ENCODE measurements at regions of chr17 and their contacts with region 1.

Region 1: GRCh38 chr17:66483906-66484305 is 181.5 kb downstream of the PRKCA start:
- DNase-seq: no peak
- H3K4me3 ChIP-seq: no peak overlapping the region
- H3K27ac ChIP-seq: no peak overlapping the region
- H3K4me1 ChIP-seq: no peaks in the 10 kb centered on the region
- H3K27me3 ChIP-seq: no peaks in the 10 kb centered on the region
- CTCF ChIP-seq: no peak
- POLR2A ChIP-seq: no peak

Region 2: DNA sequence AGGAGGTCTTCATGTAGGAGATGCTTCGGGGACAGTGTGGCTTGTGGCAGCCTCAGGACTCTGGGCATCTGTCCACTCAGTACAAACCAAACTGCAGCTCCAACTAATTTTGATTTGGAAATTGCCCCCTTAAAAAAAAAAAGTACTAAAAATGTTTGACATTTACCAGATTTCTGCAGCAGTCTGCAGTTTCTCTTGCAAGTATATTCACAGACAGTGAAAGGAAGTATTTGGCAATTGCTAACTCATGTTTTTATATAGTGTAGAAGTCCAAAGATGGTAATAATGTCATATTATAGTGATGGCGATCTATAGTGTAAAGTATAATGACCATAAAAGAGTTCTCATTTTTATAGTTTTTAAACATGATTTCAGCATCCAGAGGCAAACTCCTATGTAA is 37.1 kb after region 1 on chr17:
- intact Hi-C with region 1: loop called (anchors 2 kb)
- DNase-seq: no peak
- H3K4me3 ChIP-seq: no peak overlapping the region
- H3K27ac ChIP-seq: no peak overlapping the region
- H3K4me1 ChIP-seq: no peaks in the 10 kb centered on the region
- H3K27me3 ChIP-seq: no peaks in the 10 kb centered on the region
- CTCF ChIP-seq: no peak
- POLR2A ChIP-seq: no peak

Measured in breast epithelium (tissue), 4 donors.